AG04449 (cell line): ENCODE measurements at regions of chr5 and their contacts with region 1.

Region 1: GRCh38 chr5:123423278-123424149 is at the start of gene CEP120:
- DNase-seq: peak; percentile 93
- H3K4me3 ChIP-seq: peak within 1 kb of the TSS; percentile 78
- CTCF ChIP-seq: peak; percentile 89

Region 2: GRCh38 chr5:123412206-123412605 is 11.3 kb before region 1 on chr5:
- CTCF ChIA-PET with region 1: interaction called, 22 read pairs
- POLR2A ChIA-PET with region 1: no interaction called
- DNase-seq: no peak
- H3K4me3 ChIP-seq: no peak overlapping the region
- CTCF ChIP-seq: no peak

Region 3: DNA sequence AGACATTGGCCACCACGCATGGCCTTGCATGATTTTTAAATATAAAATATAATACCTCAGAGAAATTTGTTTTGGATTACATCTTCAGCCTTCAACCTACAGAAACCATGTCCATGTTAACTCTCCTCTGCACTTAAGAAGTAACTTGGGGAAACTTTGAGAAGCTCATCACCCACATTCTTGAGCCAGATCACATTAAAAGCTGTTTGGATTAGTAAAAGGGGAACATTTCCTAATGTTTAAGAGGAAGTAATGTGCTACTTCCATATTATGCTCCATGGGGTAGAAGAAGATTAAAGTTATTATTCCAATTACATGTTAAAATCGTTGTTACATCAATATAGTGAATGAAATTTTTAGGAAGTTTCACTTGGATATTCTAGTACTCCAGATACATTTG is 10.1 kb after region 1 on chr5:
- CTCF ChIA-PET with region 1: interaction called, 17 read pairs
- POLR2A ChIA-PET with region 1: no interaction called
- DNase-seq: no peak
- H3K4me3 ChIP-seq: no peak overlapping the region
- CTCF ChIP-seq: no peak

Region 4: GRCh38 chr5:123512611-123513461 is 89.3 kb after region 1 on chr5:
- CTCF ChIA-PET with region 1: interaction called, 14 read pairs
- POLR2A ChIA-PET with region 1: interaction called, 6 read pairs
- DNase-seq: no peak
- H3K4me3 ChIP-seq: peak overlapping the region; percentile 85
- CTCF ChIP-seq: no peak

Region 5: GRCh38 chr5:123605822-123606221 is 182.3 kb after region 1 on chr5:
- CTCF ChIA-PET with region 1: interaction called, 56 read pairs
- POLR2A ChIA-PET with region 1: interaction called, 4 read pairs
- DNase-seq: no peak
- H3K4me3 ChIP-seq: no peak overlapping the region
- CTCF ChIP-seq: no peak

Region 6: GRCh38 chr5:123610665-123611405 is 187.3 kb after region 1 on chr5:
- CTCF ChIA-PET with region 1: interaction called, 56 read pairs
- POLR2A ChIA-PET with region 1: interaction called, 4 read pairs
- DNase-seq: peak; percentile 26
- H3K4me3 ChIP-seq: no peak overlapping the region
- CTCF ChIP-seq: peak; percentile 76